ENCODE measurements at regions of chr20 and their contacts with region 1.

Region 1: DNA sequence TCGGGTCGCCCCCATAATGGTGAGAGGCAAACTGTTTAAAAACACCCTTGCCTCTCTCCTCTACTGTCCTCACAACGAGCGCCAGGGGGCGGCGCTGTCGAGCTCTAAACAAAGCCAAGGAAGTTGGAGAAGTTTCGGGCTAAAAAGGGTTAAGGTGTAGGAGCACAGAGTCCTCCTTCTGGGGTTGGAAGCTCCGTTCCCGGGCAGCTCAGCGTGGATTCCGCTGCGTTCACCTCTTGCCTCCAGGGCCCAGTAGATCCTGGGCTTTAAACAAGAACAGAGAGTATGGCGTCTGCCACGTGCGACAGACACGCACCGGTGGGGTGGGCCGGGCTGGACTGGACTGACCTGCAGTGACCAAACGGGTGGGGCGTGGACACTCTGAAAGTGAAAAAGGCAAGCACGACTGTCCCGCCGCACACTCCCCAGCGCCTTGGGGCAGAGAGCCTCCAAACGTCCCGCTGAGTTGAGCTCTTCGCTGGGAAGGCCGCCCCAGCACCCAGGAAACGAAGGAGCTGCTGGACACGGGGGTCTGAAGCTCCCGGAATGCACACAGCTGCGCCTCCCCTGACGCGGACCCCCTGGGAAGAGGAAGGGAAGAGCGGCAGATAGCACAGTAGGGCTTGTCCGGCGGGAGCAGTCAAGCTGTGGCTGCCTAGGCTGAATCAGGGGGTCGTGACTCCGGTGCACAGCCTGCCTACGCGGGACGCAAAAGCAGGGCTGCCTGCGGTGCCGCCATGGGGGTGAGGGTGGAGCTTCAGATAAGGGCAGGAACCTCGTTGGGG is 1.6 kb upstream of the THBD start:
- DNase-seq: peak; percentile 55 to 84
- ATAC-seq: peak; percentile 20 to 37
- H3K4me3 ChIP-seq: peak overlapping the region; percentile 63 to 84 (median 72)
- H3K27ac ChIP-seq: peak overlapping the region; percentile 93 to 95 (median 94)
- H3K4me1 ChIP-seq: peaks cover 19 to 32% of the 10 kb centered on the region in 2 donors
- H3K27me3 ChIP-seq: no peaks in the 10 kb centered on the region
- CTCF ChIP-seq: peak; percentile 71 to 87 (median 75)
- POLR2A ChIP-seq: peak; percentile 27 to 51

Region 2: GRCh38 chr20:22691369-22692118 is 359.5 kb before region 1 on chr20:
- in situ Hi-C with region 1: loop called in 3 of 4 experiments (anchors 25 kb)
- intact Hi-C with region 1: loop called (anchors 10 kb)
- DNase-seq: peak; percentile 41 to 58
- ATAC-seq: peak; percentile 88 to 90
- H3K4me3 ChIP-seq: peak overlapping the region; percentile 15 to 48 (median 37)
- H3K27ac ChIP-seq: no peak overlapping the region
- H3K4me1 ChIP-seq: peaks cover 6 to 12% of the 10 kb centered on the region in 2 donors
- H3K27me3 ChIP-seq: no peaks in the 10 kb centered on the region
- CTCF ChIP-seq: peak; percentile 83 to 93 (median 89)
- POLR2A ChIP-seq: no peak

Region 3: DNA sequence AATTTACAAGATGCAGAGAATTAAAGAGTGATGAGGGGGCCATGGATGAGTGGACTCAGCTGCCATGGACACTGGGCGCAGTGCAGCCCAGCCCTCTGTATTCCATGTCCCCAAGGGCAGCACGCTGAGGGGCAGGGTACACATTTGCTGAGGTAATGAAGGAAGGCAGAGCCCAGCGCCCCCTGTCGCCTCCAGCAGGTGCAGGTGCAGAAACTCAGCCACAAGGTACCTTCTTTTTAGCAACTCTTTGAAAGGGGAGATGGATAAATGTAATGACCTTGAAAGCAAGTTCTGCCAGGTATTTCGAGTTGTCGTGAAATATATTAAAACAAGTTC is 27.9 kb after region 1 on chr20:
- in situ Hi-C with region 1: no loop called
- intact Hi-C with region 1: no loop called
- DNase-seq: no peak
- ATAC-seq: no peak
- H3K4me3 ChIP-seq: no peak overlapping the region
- H3K27ac ChIP-seq: no peak overlapping the region
- H3K4me1 ChIP-seq: peaks cover 0 to 11% of the 10 kb centered on the region in 2 donors
- H3K27me3 ChIP-seq: no peaks in the 10 kb centered on the region
- CTCF ChIP-seq: no peak
- POLR2A ChIP-seq: no peak

Region 4: GRCh38 chr20:23092384-23092756 is 41.3 kb after region 1 on chr20:
- in situ Hi-C with region 1: no loop called
- intact Hi-C with region 1: loop called (anchors 5 kb)
- DNase-seq: no peak
- ATAC-seq: peak in 1 of 2 donors; percentile 76
- H3K4me3 ChIP-seq: no peak overlapping the region
- H3K27ac ChIP-seq: peak overlapping the region; percentile 57 to 88 (median 68)
- H3K4me1 ChIP-seq: peaks cover 23 to 26% of the 10 kb centered on the region in 2 donors
- H3K27me3 ChIP-seq: no peaks in the 10 kb centered on the region
- CTCF ChIP-seq: no peak
- POLR2A ChIP-seq: no peak

Region 5: GRCh38 chr20:23147964-23148730 is 97.1 kb after region 1 on chr20:
- in situ Hi-C with region 1: no loop called
- intact Hi-C with region 1: loop called (anchors 2 kb)
- DNase-seq: peak; percentile 91 to 96
- ATAC-seq: peak; percentile 59 to 72
- H3K4me3 ChIP-seq: peak overlapping the region in 2 of 4 donors; percentile 15 to 36
- H3K27ac ChIP-seq: peak overlapping the region; percentile 94 to 99 (median 94)
- H3K4me1 ChIP-seq: peaks cover 91 to 97% of the 10 kb centered on the region in 2 donors
- H3K27me3 ChIP-seq: no peaks in the 10 kb centered on the region
- CTCF ChIP-seq: no peak
- POLR2A ChIP-seq: peak; percentile 89 to 91

Region 6: GRCh38 chr20:23178806-23179205 is 127.8 kb after region 1 on chr20:
- in situ Hi-C with region 1: loop called in 3 of 4 experiments (anchors 10 kb)
- intact Hi-C with region 1: loop called (anchors 1 kb)
- DNase-seq: peak in 1 of 2 donors; percentile 54
- ATAC-seq: peak; percentile 69 to 83
- H3K4me3 ChIP-seq: no peak overlapping the region
- H3K27ac ChIP-seq: peak overlapping the region; percentile 17 to 68 (median 53)
- H3K4me1 ChIP-seq: peaks cover 9 to 13% of the 10 kb centered on the region in 2 donors
- H3K27me3 ChIP-seq: no peaks in the 10 kb centered on the region
- CTCF ChIP-seq: peak; percentile 52 to 83 (median 72)
- POLR2A ChIP-seq: no peak

Region 7: DNA sequence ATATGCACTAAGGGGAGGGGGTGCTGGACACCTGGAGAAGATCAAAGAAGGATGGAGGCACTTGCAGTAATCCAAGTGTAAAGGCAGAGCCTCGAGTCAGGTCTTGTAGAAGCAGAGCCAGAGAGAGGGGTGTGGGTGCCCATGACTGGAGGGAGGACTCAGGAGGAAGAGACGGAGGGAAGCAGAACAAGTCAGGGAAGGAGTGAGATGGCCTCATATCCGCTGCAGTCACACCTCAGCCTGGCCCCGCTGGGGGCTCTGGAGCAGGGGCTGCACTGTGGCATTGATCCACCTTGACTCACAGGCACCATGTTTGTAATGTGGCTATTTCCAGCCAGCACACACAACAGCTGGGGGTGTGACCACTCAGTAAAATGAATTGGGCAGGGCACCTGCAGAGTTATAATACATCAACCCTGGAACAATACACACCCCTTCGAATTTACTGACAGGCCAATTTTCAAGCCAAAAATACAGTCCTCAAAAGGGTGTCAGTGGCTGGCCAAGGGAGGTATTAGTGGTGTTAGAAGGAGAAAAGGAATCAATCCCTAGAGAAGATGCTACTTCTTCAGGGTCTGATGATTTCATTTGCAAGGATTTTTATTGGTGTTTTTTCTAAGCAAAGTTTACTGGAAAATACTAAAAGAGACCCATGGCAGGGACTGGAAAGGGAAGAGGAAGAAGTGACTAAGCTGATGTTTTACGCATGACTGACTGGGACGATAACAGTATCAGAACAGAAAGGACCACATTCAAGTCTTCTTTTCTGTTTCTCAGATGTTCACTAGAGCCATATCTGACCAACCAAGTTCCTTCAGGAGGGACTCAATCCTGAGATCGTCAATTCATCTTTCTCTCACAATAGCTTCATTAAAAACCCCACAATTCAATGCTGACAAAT is 280.7 kb after region 1 on chr20:
- in situ Hi-C with region 1: loop called in 2 of 4 experiments (anchors 10 to 25 kb)
- intact Hi-C with region 1: no loop called
- DNase-seq: no peak
- ATAC-seq: no peak
- H3K4me3 ChIP-seq: no peak overlapping the region
- H3K27ac ChIP-seq: no peak overlapping the region
- H3K4me1 ChIP-seq: no peaks in the 10 kb centered on the region
- H3K27me3 ChIP-seq: no peaks in the 10 kb centered on the region
- CTCF ChIP-seq: no peak
- POLR2A ChIP-seq: no peak

Region 8: DNA sequence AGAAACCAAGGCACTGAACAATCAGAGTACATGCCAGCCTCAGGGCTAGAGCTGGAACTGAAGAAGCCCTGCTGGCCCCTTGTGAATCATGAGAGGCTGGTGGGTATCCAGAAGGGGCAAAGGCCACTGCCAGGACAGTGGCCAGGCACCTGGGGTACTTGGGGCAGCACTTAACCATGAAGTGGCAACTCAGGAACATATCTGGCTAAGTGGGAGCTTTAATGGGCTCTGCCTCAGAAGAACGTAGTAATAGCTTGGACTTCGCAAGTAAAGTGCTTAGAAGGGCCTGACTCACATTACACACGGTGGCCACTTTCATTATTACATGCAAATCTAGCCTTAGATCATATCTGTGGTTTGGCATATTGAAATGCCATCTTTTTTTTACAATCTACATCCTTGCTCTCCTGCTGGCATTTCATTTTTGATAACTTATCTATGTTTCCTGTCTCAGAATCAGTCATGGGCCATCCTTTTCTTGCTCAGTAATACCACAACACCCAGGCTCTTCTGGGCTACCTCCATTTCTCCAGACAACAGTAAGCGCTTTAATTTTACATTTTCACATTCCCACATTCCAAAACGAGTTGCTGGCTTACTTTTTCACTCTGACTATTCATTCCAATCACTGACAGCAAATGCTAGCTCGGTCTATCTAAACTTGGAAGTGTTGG is 348.7 kb after region 1 on chr20:
- in situ Hi-C with region 1: no loop called
- intact Hi-C with region 1: no loop called
- DNase-seq: no peak
- ATAC-seq: no peak
- H3K4me3 ChIP-seq: no peak overlapping the region
- H3K27ac ChIP-seq: peak overlapping the region in 1 of 4 donors; percentile 53
- H3K4me1 ChIP-seq: peaks cover 43 to 56% of the 10 kb centered on the region in 2 donors
- H3K27me3 ChIP-seq: no peaks in the 10 kb centered on the region
- CTCF ChIP-seq: no peak
- POLR2A ChIP-seq: no peak

Region 9: GRCh38 chr20:23420943-23421931 is 370.2 kb after region 1 on chr20 and contains the start of gene NAPB:
- in situ Hi-C with region 1: no loop called
- intact Hi-C with region 1: loop called (anchors 10 kb)
- DNase-seq: peak; percentile 92
- ATAC-seq: peak; percentile 89 to 91
- H3K4me3 ChIP-seq: peak within 1 kb of the TSS; percentile 83 to 100 (median 96)
- H3K27ac ChIP-seq: peak within 1 kb of the TSS; percentile 97 to 99 (median 98)
- H3K4me1 ChIP-seq: peaks cover 19 to 30% of the 10 kb centered on the region in 2 donors
- H3K27me3 ChIP-seq: no peaks in the 10 kb centered on the region
- CTCF ChIP-seq: peak; percentile 62 to 92 (median 84)
- POLR2A ChIP-seq: peak; percentile 97
- total RNA-seq, gene NAPB: 3.2 to 8.3 (median 3.8) TPM